Activated B cell treated with CpG ODN at 0.5 μM for 24 hours (primary cell): ENCODE measurements at regions of chr1 and their contacts with region 1.

Region 1: GRCh38 chr1:41662061-41662764 is 177.7 kb upstream of the EDN2 start:
- DNase-seq: peak; percentile 73
- ATAC-seq: peak; percentile 78
- H3K4me3 Mint-ChIP-seq: peak overlapping the region; percentile 74
- H3K27ac Mint-ChIP-seq: no peak overlapping the region
- H3K4me1 Mint-ChIP-seq: peaks cover 78% of the 10 kb centered on the region
- H3K27me3 Mint-ChIP-seq: no peaks in the 10 kb centered on the region
- CTCF ChIP-seq: no peak

Region 2: GRCh38 chr1:41622859-41623723 is 39.1 kb before region 1 on chr1:
- CTCF ChIA-PET with region 1: no interaction called
- POLR2A ChIA-PET with region 1: interaction called, 3 read pairs
- intact Hi-C with region 1: loop called (anchors 5 kb)
- DNase-seq: no peak
- ATAC-seq: peak; percentile 92
- H3K4me3 Mint-ChIP-seq: peak overlapping the region; percentile 78
- H3K27ac Mint-ChIP-seq: peak overlapping the region; percentile 90
- H3K4me1 Mint-ChIP-seq: peaks cover 63% of the 10 kb centered on the region
- H3K27me3 Mint-ChIP-seq: no peaks in the 10 kb centered on the region
- CTCF ChIP-seq: no peak

Region 3: GRCh38 chr1:41641478-41641819 is 20.8 kb before region 1 on chr1:
- CTCF ChIA-PET with region 1: no interaction called
- POLR2A ChIA-PET with region 1: interaction called, 3 read pairs
- intact Hi-C with region 1: loop called (anchors 1 kb)
- DNase-seq: no peak
- ATAC-seq: peak; percentile 56
- H3K4me3 Mint-ChIP-seq: peak overlapping the region; percentile 33
- H3K27ac Mint-ChIP-seq: no peak overlapping the region
- H3K4me1 Mint-ChIP-seq: peaks cover 35% of the 10 kb centered on the region
- H3K27me3 Mint-ChIP-seq: no peaks in the 10 kb centered on the region
- CTCF ChIP-seq: no peak

Region 4: GRCh38 chr1:41678111-41678878 is 16.1 kb after region 1 on chr1:
- CTCF ChIA-PET with region 1: interaction called, 5 read pairs
- POLR2A ChIA-PET with region 1: interaction called, 23 read pairs
- intact Hi-C with region 1: loop called (anchors 1 kb)
- DNase-seq: no peak
- ATAC-seq: peak; percentile 75
- H3K4me3 Mint-ChIP-seq: no peak overlapping the region
- H3K27ac Mint-ChIP-seq: peak overlapping the region; percentile 44
- H3K4me1 Mint-ChIP-seq: peaks cover 49% of the 10 kb centered on the region
- H3K27me3 Mint-ChIP-seq: no peaks in the 10 kb centered on the region
- CTCF ChIP-seq: no peak

Region 5: DNA sequence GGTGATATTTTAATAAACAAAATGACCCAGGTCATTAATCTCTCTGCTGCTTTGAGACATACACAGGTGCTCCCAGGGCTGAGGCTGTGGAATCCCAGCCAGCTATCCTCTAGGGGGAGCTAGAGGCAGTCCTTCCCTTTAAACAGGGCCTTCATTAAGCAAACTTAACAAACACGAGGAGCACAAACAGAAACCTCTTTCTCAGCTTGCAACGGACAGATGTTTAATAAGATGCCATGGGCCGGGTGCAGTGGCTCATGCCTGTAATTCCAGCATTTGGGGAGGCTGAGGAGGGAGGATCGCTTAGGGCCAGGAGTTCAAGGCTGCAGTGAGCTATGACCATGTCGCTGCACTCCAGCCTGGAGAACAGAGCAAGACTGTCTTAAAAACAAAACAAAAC is 149.8 kb after region 1 on chr1:
- CTCF ChIA-PET with region 1: interaction called, 7 read pairs
- POLR2A ChIA-PET with region 1: no interaction called
- intact Hi-C with region 1: loop called (anchors 1 kb)
- DNase-seq: no peak
- ATAC-seq: peak; percentile 34
- H3K4me3 Mint-ChIP-seq: no peak overlapping the region
- H3K27ac Mint-ChIP-seq: no peak overlapping the region
- H3K4me1 Mint-ChIP-seq: peaks cover 35% of the 10 kb centered on the region
- H3K27me3 Mint-ChIP-seq: no peaks in the 10 kb centered on the region
- CTCF ChIP-seq: no peak

Region 6: GRCh38 chr1:41891199-41891896 is 229.1 kb after region 1 on chr1:
- CTCF ChIA-PET with region 1: no interaction called
- POLR2A ChIA-PET with region 1: interaction called, 3 read pairs
- intact Hi-C with region 1: loop called (anchors 5 kb)
- DNase-seq: peak; percentile 39
- ATAC-seq: peak; percentile 98
- H3K4me3 Mint-ChIP-seq: peak overlapping the region; percentile 83
- H3K27ac Mint-ChIP-seq: peak overlapping the region; percentile 88
- H3K4me1 Mint-ChIP-seq: peaks cover 15% of the 10 kb centered on the region
- H3K27me3 Mint-ChIP-seq: no peaks in the 10 kb centered on the region
- CTCF ChIP-seq: no peak